CD8-positive, alpha-beta memory T cell (primary cell): ENCODE measurements at regions of chr3 and their contacts with region 1.

Region 1: DNA sequence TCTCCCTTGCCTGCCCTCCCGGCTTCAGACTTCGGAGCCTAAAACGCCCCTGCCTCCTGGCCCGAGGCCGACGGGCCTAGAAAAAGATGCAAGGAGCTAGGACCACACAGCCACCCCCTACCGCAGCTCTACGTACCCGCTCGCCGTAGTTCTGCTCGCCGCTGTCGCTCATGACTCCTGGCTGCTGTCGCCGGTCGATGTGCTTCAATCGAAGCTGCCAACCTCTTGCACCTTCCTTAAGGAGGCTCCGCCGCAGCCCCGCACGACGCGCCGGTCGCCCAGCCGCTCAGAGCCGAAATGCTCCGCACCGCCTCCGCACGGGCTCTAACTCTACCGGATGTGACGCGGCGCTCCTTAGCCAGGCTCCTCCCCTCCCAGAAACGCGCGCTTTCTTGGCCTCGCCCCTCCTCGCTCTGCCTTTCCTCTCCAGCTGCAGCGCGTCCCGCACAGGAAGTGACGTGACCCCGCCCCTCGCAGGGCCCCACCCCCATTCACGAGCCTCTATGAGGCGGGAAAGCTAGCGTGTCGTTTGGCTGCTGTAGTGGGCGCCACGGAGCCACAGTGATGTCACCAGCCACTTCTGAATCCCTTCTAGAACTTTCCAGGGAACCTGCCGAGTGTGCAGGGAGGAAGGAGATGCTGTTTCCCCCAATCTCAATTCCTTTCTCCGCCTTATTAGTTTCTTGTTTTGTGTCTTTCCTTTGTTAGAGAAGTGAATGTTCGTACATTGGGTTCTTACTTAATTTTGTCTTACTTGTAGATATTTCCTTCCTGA is at the start of gene TRA2B:
- DNase-seq: peak; percentile 97 to 99 (median 98)
- H3K4me3 ChIP-seq: peak within 1 kb of the TSS; percentile 99
- H3K4me3 Mint-ChIP-seq: peak within 1 kb of the TSS; percentile 96 to 100 (median 100)
- H3K27ac ChIP-seq: peak within 1 kb of the TSS; percentile 100
- H3K27ac Mint-ChIP-seq: peak within 1 kb of the TSS; percentile 98 to 100 (median 100)
- H3K4me1 ChIP-seq: peaks cover 23% of the 10 kb centered on the region
- H3K4me1 Mint-ChIP-seq: peaks cover 41 to 58% (median 45%) of the 10 kb centered on the region in 3 donors
- H3K27me3 ChIP-seq: no peaks in the 10 kb centered on the region
- H3K27me3 Mint-ChIP-seq: peaks cover 0 to 11% of the 10 kb centered on the region in 2 donors
- total RNA-seq, gene TRA2B: 305 to 324 TPM

Region 2: DNA sequence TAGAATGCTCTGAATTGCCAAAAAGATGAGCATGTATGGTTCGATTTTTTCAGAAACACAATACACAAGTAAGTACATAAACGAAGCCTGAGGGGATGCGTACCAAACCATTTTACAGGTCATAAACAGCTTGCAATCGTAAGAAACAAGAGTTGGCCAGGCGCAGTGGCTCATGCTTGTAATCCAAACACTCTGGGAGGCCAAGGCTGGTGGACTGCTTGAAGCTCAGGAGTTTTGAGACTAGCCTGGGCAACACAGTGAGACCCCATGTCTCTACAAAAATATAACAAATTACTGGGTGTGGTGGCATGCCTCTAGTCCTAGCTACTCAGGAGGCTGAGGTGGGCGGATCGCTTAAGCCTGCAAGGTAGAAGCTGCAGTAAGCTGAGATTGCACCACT is 13.5 kb before region 1 on chr3:
- CTCF ChIA-PET with region 1: interaction called, 38 read pairs
- POLR2A ChIA-PET with region 1: interaction called, 22 read pairs
- DNase-seq: no peak
- H3K4me3 ChIP-seq: no peak overlapping the region
- H3K4me3 Mint-ChIP-seq: peak overlapping the region in 1 of 7 donors; percentile 28
- H3K27ac ChIP-seq: no peak overlapping the region
- H3K27ac Mint-ChIP-seq: peak overlapping the region in 4 of 8 donors; percentile 19 to 75 (median 34)
- H3K4me1 ChIP-seq: peaks cover 36% of the 10 kb centered on the region
- H3K4me1 Mint-ChIP-seq: peaks cover 58 to 74% (median 65%) of the 10 kb centered on the region in 3 donors
- H3K27me3 ChIP-seq: no peaks in the 10 kb centered on the region
- H3K27me3 Mint-ChIP-seq: no peaks in the 10 kb centered on the region

Region 3: GRCh38 chr3:186570096-186570940 is 632.4 kb after region 1 on chr3 and contains the start of gene DNAJB11:
- CTCF ChIA-PET with region 1: interaction called, 5 read pairs
- POLR2A ChIA-PET with region 1: interaction called, 19 read pairs
- DNase-seq: peak; percentile 98 to 99 (median 99)
- H3K4me3 ChIP-seq: peak within 1 kb of the TSS; percentile 77
- H3K4me3 Mint-ChIP-seq: peak within 1 kb of the TSS; percentile 86 to 99 (median 89)
- H3K27ac ChIP-seq: peak within 1 kb of the TSS; percentile 98
- H3K27ac Mint-ChIP-seq: peak within 1 kb of the TSS; percentile 93 to 100 (median 98)
- H3K4me1 ChIP-seq: peaks cover 38% of the 10 kb centered on the region
- H3K4me1 Mint-ChIP-seq: peaks cover 56 to 75% (median 72%) of the 10 kb centered on the region in 3 donors
- H3K27me3 ChIP-seq: no peaks in the 10 kb centered on the region
- H3K27me3 Mint-ChIP-seq: no peaks in the 10 kb centered on the region
- total RNA-seq, gene DNAJB11: 62.7 to 65.6 TPM

Region 4: DNA sequence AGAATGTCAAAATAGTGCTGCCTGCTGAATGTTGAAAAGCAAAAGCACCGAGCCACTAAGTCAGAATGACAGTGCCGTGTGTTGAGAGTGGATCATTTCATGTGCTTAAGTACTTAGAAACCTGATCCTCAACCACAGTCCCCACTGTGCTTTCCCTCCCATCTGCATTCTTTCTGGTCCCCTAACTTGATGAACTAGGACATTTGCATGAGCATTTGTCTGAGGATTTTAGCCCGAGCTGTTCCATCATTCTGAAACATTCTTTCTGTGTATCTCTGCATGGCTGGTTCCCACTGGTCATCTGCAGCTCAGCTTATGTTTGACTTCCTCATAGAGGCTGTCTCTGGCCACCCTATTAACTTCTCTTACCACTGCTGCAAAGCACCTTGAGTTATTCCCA is 1690.3 kb after region 1 on chr3:
- CTCF ChIA-PET with region 1: no interaction called
- POLR2A ChIA-PET with region 1: no interaction called
- DNase-seq: no peak
- H3K4me3 ChIP-seq: no peak overlapping the region
- H3K4me3 Mint-ChIP-seq: no peak overlapping the region
- H3K27ac ChIP-seq: no peak overlapping the region
- H3K27ac Mint-ChIP-seq: no peak overlapping the region
- H3K4me1 ChIP-seq: no peaks in the 10 kb centered on the region
- H3K4me1 Mint-ChIP-seq: no peaks in the 10 kb centered on the region
- H3K27me3 ChIP-seq: no peaks in the 10 kb centered on the region
- H3K27me3 Mint-ChIP-seq: peaks cover 7 to 35% of the 10 kb centered on the region in 2 donors